ENCODE measurements at regions of chrX and their contacts with region 1.

Region 1: GRCh38 chrX:11100281-11101035 is 10.7 kb upstream of the HCCS start:
- DNase-seq: peak; percentile 30 to 52
- H3K4me3 ChIP-seq: no peak overlapping the region
- H3K27ac ChIP-seq: peak overlapping the region; percentile 48 to 75
- H3K4me1 ChIP-seq: no peaks in the 10 kb centered on the region
- H3K27me3 ChIP-seq: no peaks in the 10 kb centered on the region
- CTCF ChIP-seq: peak; percentile 36 to 55 (median 41)
- POLR2A ChIP-seq: no peak

Region 2: GRCh38 chrX:10189317-10190268 is 910.9 kb before region 1 on chrX:
- intact Hi-C with region 1: loop called (anchors 10 kb)
- DNase-seq: peak; percentile 77 to 78
- H3K4me3 ChIP-seq: no peak overlapping the region
- H3K27ac ChIP-seq: peak overlapping the region in 1 of 2 donors; percentile 49
- H3K4me1 ChIP-seq: no peaks in the 10 kb centered on the region
- H3K27me3 ChIP-seq: no peaks in the 10 kb centered on the region
- CTCF ChIP-seq: peak; percentile 78 to 90 (median 85)
- POLR2A ChIP-seq: no peak

Region 3: DNA sequence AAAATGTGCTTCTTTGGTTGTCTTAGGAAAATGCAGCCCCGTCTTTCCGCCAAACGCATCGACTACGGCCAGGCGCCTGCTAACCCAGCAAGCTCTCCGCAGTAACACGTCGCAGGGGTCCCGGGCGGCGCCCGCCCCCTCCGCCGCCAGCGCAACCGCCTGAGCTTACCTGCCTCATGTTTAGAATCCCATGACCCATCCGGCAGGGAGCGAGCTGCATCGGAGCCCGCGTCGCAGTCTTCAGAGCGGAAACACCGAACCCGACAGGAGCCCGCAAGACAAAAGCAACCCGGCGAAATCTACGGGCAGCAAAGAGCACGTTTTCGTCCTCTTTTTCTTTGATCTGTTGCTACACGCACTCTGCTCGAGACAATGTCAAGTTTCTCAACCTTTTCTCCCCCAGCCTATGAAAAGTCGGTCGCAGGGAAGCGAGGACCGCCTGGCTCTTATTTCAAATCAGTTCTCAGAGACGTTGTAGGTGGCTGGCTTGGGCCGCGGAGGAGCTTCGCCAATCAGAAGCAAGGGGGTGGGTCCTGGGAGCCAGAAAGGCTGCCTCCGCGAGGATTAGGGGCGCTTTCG is 480.2 kb before region 1 on chrX and contains the start of gene MID1:
- intact Hi-C with region 1: loop called (anchors 10 kb)
- DNase-seq: peak; percentile 72 to 79
- H3K4me3 ChIP-seq: peak within 1 kb of the TSS; percentile 52
- H3K27ac ChIP-seq: peak within 1 kb of the TSS; percentile 80 to 85
- H3K4me1 ChIP-seq: no peaks in the 10 kb centered on the region
- H3K27me3 ChIP-seq: no peaks in the 10 kb centered on the region
- CTCF ChIP-seq: no peak
- POLR2A ChIP-seq: peak; percentile 39 to 64
- total RNA-seq, gene MID1: 9.1 to 29.2 (median 18.8) TPM

Region 4: DNA sequence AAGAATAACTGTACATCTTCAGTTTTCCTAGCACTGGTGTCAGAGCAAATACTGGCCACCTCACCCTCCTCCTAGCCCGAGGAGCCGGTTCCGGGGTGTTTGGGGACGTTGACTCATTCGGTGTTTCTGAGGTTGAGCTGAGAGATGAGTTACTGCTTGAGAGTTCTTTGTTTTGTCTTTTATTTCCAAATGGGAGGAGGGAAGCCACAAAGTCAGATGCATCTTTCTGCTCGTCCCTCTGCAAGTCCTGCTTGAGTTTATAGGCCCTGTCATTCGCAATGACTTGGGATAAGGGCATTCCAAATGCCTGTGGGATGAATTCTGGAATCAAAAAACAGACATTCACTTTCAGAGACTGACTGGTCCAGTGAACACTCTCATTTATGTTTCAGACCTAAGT is 88.2 kb after region 1 on chrX:
- intact Hi-C with region 1: no loop called
- DNase-seq: no peak
- H3K4me3 ChIP-seq: no peak overlapping the region
- H3K27ac ChIP-seq: no peak overlapping the region
- H3K4me1 ChIP-seq: no peaks in the 10 kb centered on the region
- H3K27me3 ChIP-seq: no peaks in the 10 kb centered on the region
- CTCF ChIP-seq: no peak
- POLR2A ChIP-seq: no peak